ENCODE measurements at regions of chr2 and their contacts with region 1.

Region 1: GRCh38 chr2:196987649-196988364 is 61.3 kb upstream of the PGAP1 start:
- H3K4me3 Mint-ChIP-seq: peak overlapping the region; percentile 48
- H3K27ac Mint-ChIP-seq: peak overlapping the region; percentile 84
- H3K4me1 Mint-ChIP-seq: peaks cover 41% of the 10 kb centered on the region
- H3K27me3 Mint-ChIP-seq: no peaks in the 10 kb centered on the region

Region 2: DNA sequence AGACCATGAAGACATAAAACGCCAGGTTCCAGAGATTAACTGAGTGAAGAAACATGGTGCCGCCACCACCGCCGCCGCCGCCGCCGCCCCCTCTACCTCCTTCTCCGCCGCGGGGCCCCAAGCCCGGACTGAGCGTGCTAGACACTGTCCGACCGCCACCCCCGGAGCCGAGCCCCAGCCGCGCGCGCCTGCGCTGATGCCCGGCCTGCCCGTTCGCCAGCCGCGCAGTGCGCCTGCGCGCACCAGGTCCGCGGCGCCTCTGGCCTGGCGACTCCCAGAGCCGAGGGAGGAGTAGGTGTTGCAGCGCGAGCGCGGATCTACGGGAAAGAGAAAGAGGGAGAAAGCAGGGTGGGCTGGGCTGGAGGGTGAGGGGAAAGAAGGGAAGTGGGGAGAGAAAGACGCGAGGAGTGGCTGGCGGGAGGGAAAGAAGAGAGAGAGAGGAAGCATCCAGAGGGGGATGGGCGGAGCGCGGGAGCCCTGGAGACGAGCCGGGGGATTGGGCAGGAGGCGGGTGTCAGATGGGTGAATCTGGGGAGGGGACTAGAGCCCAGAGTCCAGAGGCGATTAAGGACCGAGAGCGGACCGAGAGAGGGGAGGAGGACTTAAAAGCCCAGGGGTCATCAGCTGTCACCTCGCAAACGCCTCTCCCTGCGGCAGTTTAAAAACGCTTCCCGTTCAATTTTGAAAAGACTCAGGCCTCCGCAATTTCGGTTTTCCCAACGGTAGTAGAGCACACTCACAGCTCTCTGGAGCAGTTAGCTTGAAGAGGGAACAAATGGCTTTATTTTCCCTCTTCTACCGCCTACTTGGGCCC is 61.0 kb before region 1 on chr2 and contains the start of gene PGAP1:
- intact Hi-C with region 1: loop called (anchors 5 kb)
- H3K4me3 Mint-ChIP-seq: peak within 1 kb of the TSS; percentile 98
- H3K27ac Mint-ChIP-seq: peak within 1 kb of the TSS; percentile 87
- H3K4me1 Mint-ChIP-seq: peaks cover 19% of the 10 kb centered on the region
- H3K27me3 Mint-ChIP-seq: peaks cover 13% of the 10 kb centered on the region